ENCODE measurements at regions of chr1 and their contacts with region 1.

Region 1: GRCh38 chr1:117026361-117026760 is 24.8 kb downstream of the CD101 start:
- DNase-seq: peak; percentile 83
- H3K4me3 ChIP-seq: peak overlapping the region in 1 of 3 experiments; percentile 5
- H3K27ac ChIP-seq: peak overlapping the region; percentile 87
- H3K4me1 ChIP-seq: peaks cover 27% of the 10 kb centered on the region
- H3K27me3 ChIP-seq: peaks cover 0 to 2% of the 10 kb centered on the region in 2 experiments
- CTCF ChIP-seq: no peak
- POLR2A ChIP-seq: no peak

Region 2: GRCh38 chr1:116951200-116951935 is 75.0 kb before region 1 on chr1:
- CTCF ChIA-PET with region 1: no interaction called
- POLR2A ChIA-PET with region 1: no interaction called
- dilution Hi-C with region 1: no loop called
- intact Hi-C with region 1: no loop called
- DNase-seq: peak; percentile 77
- H3K4me3 ChIP-seq: no peak overlapping the region
- H3K27ac ChIP-seq: no peak overlapping the region
- H3K4me1 ChIP-seq: peaks cover 7% of the 10 kb centered on the region
- H3K27me3 ChIP-seq: no peaks in the 10 kb centered on the region
- CTCF ChIP-seq: no peak
- POLR2A ChIP-seq: no peak

Region 3: GRCh38 chr1:117051224-117052064 is 25.1 kb after region 1 on chr1:
- CTCF ChIA-PET with region 1: no interaction called
- POLR2A ChIA-PET with region 1: no interaction called
- dilution Hi-C with region 1: no loop called
- intact Hi-C with region 1: loop called (anchors 1 kb)
- DNase-seq: peak; percentile 32
- H3K4me3 ChIP-seq: no peak overlapping the region
- H3K27ac ChIP-seq: peak overlapping the region; percentile 16
- H3K4me1 ChIP-seq: peaks cover 6% of the 10 kb centered on the region
- H3K27me3 ChIP-seq: no peaks in the 10 kb centered on the region
- CTCF ChIP-seq: no peak
- POLR2A ChIP-seq: no peak

Region 4: GRCh38 chr1:117077267-117077666 is 50.9 kb after region 1 on chr1:
- CTCF ChIA-PET with region 1: no interaction called
- POLR2A ChIA-PET with region 1: no interaction called
- dilution Hi-C with region 1: no loop called
- intact Hi-C with region 1: no loop called
- DNase-seq: peak; percentile 90
- H3K4me3 ChIP-seq: no peak overlapping the region
- H3K27ac ChIP-seq: peak overlapping the region; percentile 36
- H3K4me1 ChIP-seq: peaks cover 13% of the 10 kb centered on the region
- H3K27me3 ChIP-seq: no peaks in the 10 kb centered on the region
- CTCF ChIP-seq: no peak
- POLR2A ChIP-seq: no peak